Right ventricle myocardium superior (tissue), 1 donor: ENCODE measurements at regions of chr20 and their contacts with region 1.

Region 1: GRCh38 chr20:23937303-23938117 is 51.1 kb downstream of the GGTLC1 start:
- DNase-seq: peak; percentile 50
- ATAC-seq: peak; percentile 96

Region 2: GRCh38 chr20:23832775-23833508 is 104.6 kb before region 1 on chr20:
- intact Hi-C with region 1: no loop called
- DNase-seq: no peak
- ATAC-seq: no peak

Region 3: DNA sequence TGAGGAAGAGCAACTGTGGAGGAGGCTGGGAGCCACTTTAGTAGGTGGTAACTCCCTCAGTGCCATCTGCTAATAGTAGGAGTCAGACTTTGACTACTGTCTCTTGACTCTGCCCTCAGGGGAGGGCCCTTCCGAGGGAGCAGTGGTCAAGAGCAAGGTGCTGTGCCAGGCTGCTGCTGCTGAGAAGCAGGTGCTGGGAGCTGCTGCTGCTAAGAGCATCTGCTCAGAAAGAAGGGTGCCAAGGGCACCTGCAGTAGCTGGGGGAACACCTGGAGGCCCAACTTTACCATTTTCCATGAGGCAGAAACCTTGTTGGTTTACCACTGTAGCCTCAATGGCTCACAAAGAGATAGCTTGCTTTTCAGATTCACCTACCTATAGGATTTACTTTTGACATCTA is 32.5 kb after region 1 on chr20:
- intact Hi-C with region 1: loop called (anchors 5 kb)
- DNase-seq: no peak
- ATAC-seq: no peak

Region 4: GRCh38 chr20:23995905-23996666 is 58.6 kb after region 1 on chr20:
- intact Hi-C with region 1: loop called (anchors 5 kb)
- DNase-seq: peak; percentile 63
- ATAC-seq: peak; percentile 53